ENCODE measurements at regions of chr14 and their contacts with region 1.

Region 1: GRCh38 chr14:53152890-53153701 is at the start of gene DDHD1:
- DNase-seq: peak; percentile 96
- H3K4me3 Mint-ChIP-seq: peak within 1 kb of the TSS; percentile 100
- H3K27ac Mint-ChIP-seq: peak within 1 kb of the TSS; percentile 99
- H3K4me1 Mint-ChIP-seq: peaks cover 44% of the 10 kb centered on the region
- H3K27me3 Mint-ChIP-seq: no peaks in the 10 kb centered on the region
- total RNA-seq, gene DDHD1: 67.9 and 70.2 TPM in 2 replicates

Region 2: DNA sequence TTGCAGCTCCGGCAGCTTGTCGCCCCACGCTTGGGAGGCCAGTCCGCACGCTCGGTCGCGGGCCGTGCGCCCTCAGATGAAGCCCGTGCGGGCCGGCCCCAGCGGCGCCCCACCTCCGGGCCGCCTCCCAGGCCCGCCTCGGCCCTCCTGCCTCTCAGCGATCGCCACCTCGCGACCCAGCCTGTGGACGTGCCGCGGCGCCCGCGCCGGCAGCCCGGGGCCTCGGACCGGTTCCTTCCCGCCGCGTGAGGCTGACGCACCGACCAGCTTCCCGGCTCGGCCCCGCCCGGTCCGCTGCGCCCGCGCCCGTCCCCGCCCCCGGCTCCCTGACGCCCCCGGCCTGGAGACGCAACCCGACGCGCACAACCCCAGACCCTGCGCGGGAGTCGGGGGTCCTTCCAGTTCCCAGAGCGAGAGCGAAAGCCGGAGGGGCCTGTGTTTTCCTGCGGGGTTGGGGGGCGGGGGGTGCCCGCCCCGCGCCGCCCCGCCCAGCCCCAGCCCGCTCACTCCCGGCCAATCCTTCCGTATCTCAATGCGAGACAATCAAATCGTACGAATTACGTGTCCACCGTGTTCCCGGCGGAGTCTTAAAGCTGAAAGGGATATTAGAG is 457.5 kb before region 1 on chr14 and contains the start of gene ERO1A:
- intact Hi-C with region 1: loop called (anchors 10 kb)
- DNase-seq: peak; percentile 92
- H3K4me3 Mint-ChIP-seq: peak within 1 kb of the TSS; percentile 96
- H3K27ac Mint-ChIP-seq: peak within 1 kb of the TSS; percentile 99
- H3K4me1 Mint-ChIP-seq: peaks cover 33% of the 10 kb centered on the region
- H3K27me3 Mint-ChIP-seq: no peaks in the 10 kb centered on the region
- total RNA-seq, gene ERO1A: 170 and 171 TPM in 2 replicates

Region 3: GRCh38 chr14:53180268-53181221 is 27.4 kb after region 1 on chr14:
- intact Hi-C with region 1: loop called (anchors 1 kb)
- DNase-seq: peak; percentile 82
- H3K4me3 Mint-ChIP-seq: peak overlapping the region; percentile 26
- H3K27ac Mint-ChIP-seq: peak overlapping the region; percentile 74
- H3K4me1 Mint-ChIP-seq: peaks cover 36% of the 10 kb centered on the region
- H3K27me3 Mint-ChIP-seq: peaks cover 1% of the 10 kb centered on the region

Region 4: DNA sequence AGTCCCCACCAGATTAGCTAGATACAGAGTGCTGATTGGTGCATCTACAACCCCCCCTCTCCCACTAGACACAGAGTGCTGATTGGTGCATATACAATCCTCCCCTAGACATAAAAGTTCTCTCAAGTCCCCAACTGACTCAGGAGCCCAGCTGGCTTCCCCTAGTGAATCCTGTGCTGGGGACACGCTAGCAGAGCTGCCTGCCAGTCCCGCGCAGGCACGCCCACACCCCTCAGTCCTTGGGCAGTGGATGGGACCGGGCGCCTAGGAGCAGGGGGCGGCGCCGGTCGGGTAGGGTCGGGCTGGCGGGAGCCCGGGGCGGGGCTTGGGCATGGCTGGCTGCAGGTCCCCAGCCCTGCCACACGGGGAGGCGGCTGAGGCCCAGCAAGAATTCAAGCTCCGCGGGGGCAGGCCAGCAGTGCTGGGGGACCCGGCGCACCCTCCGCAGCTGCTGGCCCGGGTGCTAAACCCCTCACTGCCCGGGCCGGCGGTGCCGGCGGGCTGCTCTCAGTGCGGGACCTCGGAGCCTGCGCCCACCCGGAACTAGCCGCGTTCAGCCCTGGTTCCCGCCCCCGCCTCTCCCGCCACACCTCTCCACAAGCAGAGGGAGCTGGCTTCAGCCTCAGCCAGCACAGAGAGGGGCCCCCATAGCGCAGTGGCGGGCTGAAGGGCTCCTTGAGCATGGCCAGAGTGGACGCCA is 64.3 kb after region 1 on chr14:
- intact Hi-C with region 1: loop called (anchors 2 kb)
- DNase-seq: peak; percentile 93
- H3K4me3 Mint-ChIP-seq: peak overlapping the region; percentile 85
- H3K27ac Mint-ChIP-seq: peak overlapping the region; percentile 48
- H3K4me1 Mint-ChIP-seq: peaks cover 12% of the 10 kb centered on the region
- H3K27me3 Mint-ChIP-seq: no peaks in the 10 kb centered on the region

Region 5: DNA sequence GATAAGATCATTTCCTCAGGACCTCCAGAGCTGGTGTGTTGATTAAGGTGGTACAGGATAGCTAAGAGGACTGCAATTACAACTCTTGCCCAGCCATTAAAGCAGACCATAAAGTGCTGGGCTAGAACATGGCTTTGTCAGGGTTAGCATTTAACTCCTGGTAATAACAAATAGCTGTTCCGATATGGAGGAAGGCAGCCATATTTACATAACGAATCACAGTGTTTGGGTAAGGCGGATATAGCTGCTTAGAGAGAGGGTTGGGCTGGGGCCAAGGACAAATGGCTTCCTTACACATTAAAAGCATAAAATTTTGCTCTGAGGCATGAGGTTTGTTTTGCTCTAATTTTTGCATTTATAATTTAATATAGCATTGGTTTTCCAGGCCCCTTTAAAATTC is 297.8 kb after region 1 on chr14:
- intact Hi-C with region 1: no loop called
- DNase-seq: no peak
- H3K4me3 Mint-ChIP-seq: no peak overlapping the region
- H3K27ac Mint-ChIP-seq: no peak overlapping the region
- H3K4me1 Mint-ChIP-seq: no peaks in the 10 kb centered on the region
- H3K27me3 Mint-ChIP-seq: peaks cover 1% of the 10 kb centered on the region